ENCODE measurements at regions of chr9 and their contacts with region 1.

Region 1: DNA sequence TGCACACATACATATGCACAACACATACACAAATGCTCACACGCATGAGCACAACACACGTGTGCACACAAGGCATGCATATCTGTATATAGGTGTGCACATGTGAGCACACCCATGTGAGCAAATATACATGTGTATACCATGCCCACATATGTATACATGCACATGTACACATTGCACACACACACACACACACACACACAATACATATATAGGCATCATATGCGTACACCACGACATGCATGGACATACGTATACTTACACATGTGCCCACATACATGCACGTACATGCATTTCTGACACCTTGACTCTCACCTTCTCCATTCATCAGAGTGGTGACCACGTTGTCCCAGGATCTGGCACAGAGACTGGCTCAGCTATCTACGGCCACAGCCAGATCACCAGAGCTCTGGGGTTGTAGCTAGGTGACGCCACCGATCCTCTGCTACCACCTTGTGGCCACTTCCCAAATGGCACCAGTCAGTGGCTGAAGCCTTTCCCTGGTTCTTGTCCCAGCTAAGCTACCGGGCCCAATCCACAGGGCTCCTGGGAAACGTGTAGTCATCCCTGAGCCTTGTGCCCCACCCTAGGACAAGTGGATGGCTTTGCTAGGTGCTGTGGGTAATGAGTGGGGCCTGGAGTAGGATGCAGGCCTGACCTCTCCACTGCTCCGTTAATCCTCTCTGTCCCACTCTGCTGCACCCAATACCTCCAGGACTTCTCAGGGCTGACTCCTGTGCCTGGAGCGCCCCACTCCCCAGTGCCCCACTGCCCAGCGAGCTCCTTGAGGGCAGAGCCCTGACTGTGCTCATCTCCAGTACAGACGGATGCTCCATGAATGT is 194.4 kb downstream of the RGS3 start:
- DNase-seq: peak; percentile 91
- H3K4me3 ChIP-seq: no peak overlapping the region
- H3K27ac ChIP-seq: no peak overlapping the region
- H3K4me1 ChIP-seq: peaks cover 0 to 13% (median 5%) of the 10 kb centered on the region in 4 donors
- H3K27me3 ChIP-seq: peaks cover 33% of the 10 kb centered on the region
- CTCF ChIP-seq: peak; percentile 90 to 96 (median 93)
- EP300 ChIP-seq: no peak
- POLR2A ChIP-seq: no peak

Region 2: DNA sequence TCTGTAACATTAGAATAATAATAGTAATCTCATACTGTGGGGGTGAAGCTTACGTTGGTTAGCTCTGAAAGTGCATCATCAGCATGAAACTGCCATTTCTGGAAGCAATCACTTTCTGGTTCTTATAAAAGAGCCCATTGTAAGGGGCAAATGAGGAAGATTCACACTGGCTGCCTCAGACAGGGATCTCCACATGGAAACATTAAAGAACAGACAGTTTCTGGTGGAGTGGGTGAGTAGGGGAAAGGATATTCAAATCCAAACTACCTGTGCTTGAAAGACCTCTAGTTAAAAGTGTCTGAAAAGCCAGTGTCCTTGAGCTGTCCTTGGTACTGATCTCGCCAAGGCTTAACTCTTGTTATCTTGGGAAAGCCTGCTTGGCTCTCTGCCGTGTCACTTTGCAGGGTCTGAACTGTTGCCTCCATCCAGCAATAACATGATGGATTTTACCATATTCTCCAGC is 526.2 kb before region 1 on chr9:
- in situ Hi-C with region 1: loop called in 2 of 4 experiments (anchors 25 kb)
- intact Hi-C with region 1: no loop called
- DNase-seq: no peak
- H3K4me3 ChIP-seq: no peak overlapping the region
- H3K27ac ChIP-seq: no peak overlapping the region
- H3K4me1 ChIP-seq: no peaks in the 10 kb centered on the region
- H3K27me3 ChIP-seq: peaks cover 28% of the 10 kb centered on the region
- CTCF ChIP-seq: no peak
- EP300 ChIP-seq: no peak
- POLR2A ChIP-seq: no peak

Region 3: DNA sequence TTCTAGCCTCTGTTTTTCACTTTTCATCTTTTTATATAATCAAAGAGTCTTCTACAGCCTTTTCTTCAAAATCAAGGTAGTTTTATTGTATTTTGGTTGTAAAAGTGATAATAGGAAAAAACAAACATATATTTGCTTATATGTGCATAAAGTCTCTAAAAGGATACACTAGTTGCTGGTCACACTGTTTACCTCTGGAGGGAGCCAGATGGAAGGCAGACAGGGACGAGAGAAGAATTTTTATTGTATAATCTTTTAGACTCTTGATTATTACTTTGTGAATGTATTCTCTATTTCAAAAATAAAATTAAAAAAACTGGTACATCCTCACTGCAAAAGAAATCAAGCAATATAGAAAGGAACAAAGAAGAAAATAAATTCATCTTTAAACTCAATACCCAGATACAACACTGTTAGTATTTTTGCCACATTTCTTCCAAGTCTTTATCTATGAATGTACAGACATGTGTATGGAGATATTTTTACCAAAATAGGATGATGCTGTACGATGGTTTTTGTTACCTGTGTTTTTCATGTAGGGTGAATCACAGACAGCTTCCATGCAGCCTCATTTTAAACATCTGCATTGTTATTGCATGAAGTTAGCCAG is 348.6 kb before region 1 on chr9:
- in situ Hi-C with region 1: loop called in 2 of 4 experiments (anchors 25 kb)
- intact Hi-C with region 1: no loop called
- DNase-seq: peak; percentile 41
- H3K4me3 ChIP-seq: no peak overlapping the region
- H3K27ac ChIP-seq: no peak overlapping the region
- H3K4me1 ChIP-seq: no peaks in the 10 kb centered on the region
- H3K27me3 ChIP-seq: no peaks in the 10 kb centered on the region
- CTCF ChIP-seq: peak; percentile 61 to 74 (median 68)
- EP300 ChIP-seq: no peak
- POLR2A ChIP-seq: no peak

Region 4: GRCh38 chr9:113446323-113446740 is 211.6 kb before region 1 on chr9:
- in situ Hi-C with region 1: loop called in 3 of 4 experiments (anchors 5 to 10 kb)
- intact Hi-C with region 1: loop called (anchors 2 kb)
- DNase-seq: no peak
- H3K4me3 ChIP-seq: no peak overlapping the region
- H3K27ac ChIP-seq: peak overlapping the region in 1 of 4 donors; percentile 3
- H3K4me1 ChIP-seq: peaks cover 0 to 3% (median 0%) of the 10 kb centered on the region in 4 donors
- H3K27me3 ChIP-seq: no peaks in the 10 kb centered on the region
- CTCF ChIP-seq: peak; percentile 59 to 79 (median 73)
- EP300 ChIP-seq: no peak
- POLR2A ChIP-seq: no peak

Region 5: GRCh38 chr9:113591001-113591898 is 66.7 kb before region 1 on chr9:
- in situ Hi-C with region 1: loop called (anchors 5 kb)
- intact Hi-C with region 1: loop called (anchors 1 kb)
- DNase-seq: peak; percentile 78
- H3K4me3 ChIP-seq: no peak overlapping the region
- H3K27ac ChIP-seq: no peak overlapping the region
- H3K4me1 ChIP-seq: peaks cover 0 to 29% (median 9%) of the 10 kb centered on the region in 4 donors
- H3K27me3 ChIP-seq: no peaks in the 10 kb centered on the region
- CTCF ChIP-seq: peak; percentile 83 to 91 (median 85)
- EP300 ChIP-seq: no peak
- POLR2A ChIP-seq: no peak

Region 6: GRCh38 chr9:113979343-113980127 is 321.6 kb after region 1 on chr9:
- in situ Hi-C with region 1: no loop called
- intact Hi-C with region 1: no loop called
- DNase-seq: no peak
- H3K4me3 ChIP-seq: no peak overlapping the region
- H3K27ac ChIP-seq: no peak overlapping the region
- H3K4me1 ChIP-seq: no peaks in the 10 kb centered on the region
- H3K27me3 ChIP-seq: no peaks in the 10 kb centered on the region
- CTCF ChIP-seq: no peak
- EP300 ChIP-seq: no peak
- POLR2A ChIP-seq: no peak

Measured in transverse colon (tissue), 4 donors.